RWPE1 (cell line): ENCODE measurements at regions of chr3 and their contacts with region 1.

Region 1: DNA sequence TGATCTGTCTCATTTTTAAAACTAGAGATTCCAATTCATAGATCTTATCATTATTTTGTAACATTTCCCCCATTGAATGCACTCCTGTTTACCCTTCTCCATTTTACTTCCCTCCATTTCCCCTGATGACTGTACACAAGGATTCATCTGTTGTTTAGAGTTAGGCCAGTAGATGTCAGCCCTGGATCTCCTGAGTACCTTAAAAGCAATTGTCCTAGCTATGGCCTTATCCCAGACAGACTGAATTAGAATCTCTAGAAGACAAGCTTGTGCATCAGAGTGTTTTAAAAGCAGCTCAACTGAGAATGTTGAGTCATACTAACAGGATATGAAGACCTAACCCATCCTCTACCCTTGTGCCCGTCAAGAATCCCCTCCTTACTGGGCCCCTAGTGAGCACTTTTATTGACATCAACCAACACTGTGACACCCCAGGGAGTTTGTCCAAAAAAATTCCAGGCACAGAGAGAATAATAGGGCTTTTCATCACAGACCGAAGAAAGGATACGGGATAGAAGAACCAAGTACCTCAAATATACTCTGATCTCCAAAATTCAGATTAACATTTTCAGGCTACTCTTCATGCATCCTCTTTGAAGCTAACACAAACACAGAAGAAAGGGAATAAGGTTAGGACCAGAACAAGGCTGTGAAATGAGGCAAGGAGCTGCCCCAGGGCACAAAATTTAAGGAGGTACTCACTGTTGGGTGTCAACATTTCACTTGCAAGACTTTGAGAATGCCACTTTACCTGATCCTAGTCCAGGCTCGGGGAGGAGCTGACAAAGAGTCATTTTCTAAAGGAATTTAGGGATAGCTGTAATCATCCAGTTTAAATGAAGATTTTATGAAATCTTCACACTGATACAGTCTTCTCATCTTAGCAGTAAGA is 17.1 kb downstream of the ZBED2 start:
- DNase-seq: peak; percentile 78
- H3K27ac ChIP-seq: no peak overlapping the region
- CTCF ChIP-seq: peak; percentile 61

Region 2: GRCh38 chr3:111691293-111691909 is 113.4 kb after region 1 on chr3:
- CTCF ChIA-PET with region 1: interaction called, 17 read pairs
- POLR2A ChIA-PET with region 1: no interaction called
- DNase-seq: no peak
- H3K27ac ChIP-seq: no peak overlapping the region
- CTCF ChIP-seq: peak; percentile 51